OCI-LY7 (cell line): ENCODE measurements at regions of chr3 and their contacts with region 1.

Region 1: GRCh38 chr3:23389089-23389488 is 186.0 kb downstream of the UBE2E2 start:
- DNase-seq: peak; percentile 83
- H3K4me3 ChIP-seq: peak overlapping the region; percentile 89
- H3K27ac ChIP-seq: peak overlapping the region; percentile 99
- H3K4me1 ChIP-seq: peaks cover 60% of the 10 kb centered on the region
- CTCF ChIP-seq: no peak

Region 2: GRCh38 chr3:23341147-23341838 is 47.8 kb before region 1 on chr3:
- CTCF ChIA-PET with region 1: interaction called, 3 read pairs
- POLR2A ChIA-PET with region 1: interaction called, 16 read pairs
- intact Hi-C with region 1: loop called (anchors 1 kb)
- DNase-seq: peak; percentile 69
- H3K4me3 ChIP-seq: peak overlapping the region; percentile 47
- H3K27ac ChIP-seq: peak overlapping the region; percentile 94
- H3K4me1 ChIP-seq: peaks cover 87% of the 10 kb centered on the region
- CTCF ChIP-seq: no peak

Region 3: GRCh38 chr3:23435318-23435717 is 46.2 kb after region 1 on chr3:
- CTCF ChIA-PET with region 1: interaction called, 4 read pairs
- POLR2A ChIA-PET with region 1: interaction called, 8 read pairs
- intact Hi-C with region 1: loop called (anchors 2 kb)
- DNase-seq: peak; percentile 57
- H3K4me3 ChIP-seq: no peak overlapping the region
- H3K27ac ChIP-seq: peak overlapping the region; percentile 6
- H3K4me1 ChIP-seq: peaks cover 79% of the 10 kb centered on the region
- CTCF ChIP-seq: 0 out of 2 replicates have a peak, but pooled peaks have one; percentile 22

Region 4: GRCh38 chr3:23463791-23464190 is 74.7 kb after region 1 on chr3:
- CTCF ChIA-PET with region 1: no interaction called
- POLR2A ChIA-PET with region 1: no interaction called
- intact Hi-C with region 1: no loop called
- DNase-seq: no peak
- H3K4me3 ChIP-seq: no peak overlapping the region
- H3K27ac ChIP-seq: no peak overlapping the region
- H3K4me1 ChIP-seq: no peaks in the 10 kb centered on the region
- CTCF ChIP-seq: no peak

Region 5: GRCh38 chr3:23653647-23654525 is 264.8 kb after region 1 on chr3:
- CTCF ChIA-PET with region 1: interaction called, 3 read pairs
- POLR2A ChIA-PET with region 1: interaction called, 30 read pairs
- intact Hi-C with region 1: loop called (anchors 1 kb)
- DNase-seq: peak; percentile 97
- H3K4me3 ChIP-seq: peak overlapping the region; percentile 47
- H3K27ac ChIP-seq: peak overlapping the region; percentile 97
- H3K4me1 ChIP-seq: peaks cover 77% of the 10 kb centered on the region
- CTCF ChIP-seq: no peak

Region 6: DNA sequence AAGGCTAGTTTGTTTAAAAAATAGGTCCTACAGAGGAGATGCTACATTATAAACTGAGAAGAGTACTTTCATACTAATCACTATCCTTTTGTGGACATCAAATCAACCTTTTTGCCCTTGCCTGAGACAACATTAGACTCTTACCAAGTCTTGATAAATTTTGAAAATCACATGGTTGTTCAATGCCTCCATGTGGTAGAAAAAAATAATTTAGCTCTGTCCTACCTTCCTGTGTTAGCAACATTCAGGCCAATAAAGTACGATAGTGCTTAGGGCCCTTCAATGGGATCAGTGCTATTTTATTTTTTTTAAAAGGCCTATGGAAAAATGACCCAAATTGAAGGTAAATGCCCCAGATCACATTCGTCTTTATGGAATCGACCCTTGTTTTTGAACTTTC is 411.6 kb after region 1 on chr3:
- CTCF ChIA-PET with region 1: no interaction called
- POLR2A ChIA-PET with region 1: no interaction called
- intact Hi-C with region 1: loop called (anchors 2 kb)
- DNase-seq: peak; percentile 69
- H3K4me3 ChIP-seq: no peak overlapping the region
- H3K27ac ChIP-seq: no peak overlapping the region
- H3K4me1 ChIP-seq: peaks cover 18% of the 10 kb centered on the region
- CTCF ChIP-seq: peak; percentile 72